IMR-90 (cell line): ENCODE measurements at regions of chr1 and their contacts with region 1.

Region 1: DNA sequence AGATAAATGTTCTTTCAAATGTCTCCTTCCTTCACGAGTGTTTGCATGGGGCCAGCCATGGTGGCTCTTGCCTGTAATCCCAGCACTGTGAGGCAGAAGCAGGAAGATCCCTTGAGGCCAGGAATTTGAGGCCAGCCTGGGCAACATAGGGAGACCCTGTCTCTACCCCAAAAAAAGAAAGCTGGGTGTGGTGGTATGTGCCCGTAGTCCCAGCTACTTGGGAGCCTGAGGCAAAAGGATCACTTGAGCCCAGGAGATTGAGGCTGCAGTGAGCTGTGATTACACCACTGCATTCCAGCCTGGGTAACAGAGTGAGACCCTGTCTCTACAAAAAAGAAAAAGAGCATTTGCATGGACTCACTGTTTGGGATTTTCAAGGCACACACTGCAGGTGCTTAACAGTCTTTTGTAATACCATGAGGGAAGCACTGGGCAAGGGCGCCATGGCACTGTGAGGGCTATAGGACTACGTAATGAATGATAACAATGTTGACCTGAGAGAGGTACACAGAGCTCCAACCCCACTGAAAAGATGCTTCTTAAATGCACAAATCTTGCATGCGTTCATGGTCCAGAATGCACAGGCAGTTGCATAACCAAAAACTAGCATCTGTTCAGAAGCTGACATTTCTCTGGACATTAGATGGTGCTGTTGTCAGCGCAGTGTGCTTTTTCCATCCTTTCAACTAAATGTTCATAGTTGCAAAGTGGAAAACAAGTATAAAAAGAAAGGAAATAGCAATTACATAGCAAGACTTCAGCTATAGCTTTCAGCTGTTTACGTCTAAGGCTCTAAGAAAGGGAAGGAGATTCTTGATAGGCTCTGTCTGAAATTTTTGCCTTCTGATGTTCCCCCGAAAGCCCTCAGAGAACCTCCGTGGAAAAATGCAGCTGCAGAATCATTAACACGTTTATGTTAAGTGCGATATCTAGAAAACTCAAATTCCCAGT is 7.8 kb upstream of the TARBP1 start:
- DNase-seq: peak; percentile 84
- ATAC-seq: peak; percentile 88
- H3K4me3 ChIP-seq: no peak overlapping the region
- H3K27ac ChIP-seq: peak overlapping the region; percentile 4; the same call in 1 of the 2 replicates
- H3K4me1 ChIP-seq: peaks cover 4% of the 10 kb centered on the region
- H3K27me3 ChIP-seq: no peaks in the 10 kb centered on the region
- CTCF ChIP-seq: peak; percentile 87
- POLR2A ChIP-seq: 0 out of 2 replicates have a peak, but pooled peaks have one; percentile 47
- RAD21 ChIP-seq: peak; percentile 94

Region 2: GRCh38 chr1:234430691-234431090 is 56.1 kb before region 1 on chr1:
- CTCF ChIA-PET with region 1: no interaction called
- POLR2A ChIA-PET with region 1: interaction called, 12 read pairs
- dilution Hi-C with region 1: no loop called
- in situ Hi-C with region 1: no loop called
- intact Hi-C with region 1: no loop called
- DNase-seq: no peak
- ATAC-seq: no peak
- H3K4me3 ChIP-seq: no peak overlapping the region
- H3K27ac ChIP-seq: no peak overlapping the region
- H3K4me1 ChIP-seq: no peaks in the 10 kb centered on the region
- H3K27me3 ChIP-seq: no peaks in the 10 kb centered on the region
- CTCF ChIP-seq: no peak
- POLR2A ChIP-seq: no peak
- RAD21 ChIP-seq: no peak